ENCODE measurements at regions of chr5 and their contacts with region 1.

Region 1: GRCh38 chr5:179023528-179024430 is at the start of gene ZNF879:
- DNase-seq: peak; percentile 90 to 97 (median 94)
- ATAC-seq: peak; percentile 94
- H3K4me3 ChIP-seq: peak within 1 kb of the TSS; percentile 64
- H3K4me3 Mint-ChIP-seq: peak within 1 kb of the TSS; percentile 95
- H3K27ac ChIP-seq: no peak within 1 kb of the TSS
- H3K27ac Mint-ChIP-seq: peak within 1 kb of the TSS; percentile 83
- H3K4me1 ChIP-seq: peaks cover 22% of the 10 kb centered on the region
- H3K4me1 Mint-ChIP-seq: peaks cover 16% of the 10 kb centered on the region
- H3K27me3 ChIP-seq: no peaks in the 10 kb centered on the region
- H3K27me3 Mint-ChIP-seq: peaks cover 4% of the 10 kb centered on the region
- CTCF ChIP-seq: no peak
- total RNA-seq, gene ZNF879: 4.9 to 5.1 TPM

Region 2: DNA sequence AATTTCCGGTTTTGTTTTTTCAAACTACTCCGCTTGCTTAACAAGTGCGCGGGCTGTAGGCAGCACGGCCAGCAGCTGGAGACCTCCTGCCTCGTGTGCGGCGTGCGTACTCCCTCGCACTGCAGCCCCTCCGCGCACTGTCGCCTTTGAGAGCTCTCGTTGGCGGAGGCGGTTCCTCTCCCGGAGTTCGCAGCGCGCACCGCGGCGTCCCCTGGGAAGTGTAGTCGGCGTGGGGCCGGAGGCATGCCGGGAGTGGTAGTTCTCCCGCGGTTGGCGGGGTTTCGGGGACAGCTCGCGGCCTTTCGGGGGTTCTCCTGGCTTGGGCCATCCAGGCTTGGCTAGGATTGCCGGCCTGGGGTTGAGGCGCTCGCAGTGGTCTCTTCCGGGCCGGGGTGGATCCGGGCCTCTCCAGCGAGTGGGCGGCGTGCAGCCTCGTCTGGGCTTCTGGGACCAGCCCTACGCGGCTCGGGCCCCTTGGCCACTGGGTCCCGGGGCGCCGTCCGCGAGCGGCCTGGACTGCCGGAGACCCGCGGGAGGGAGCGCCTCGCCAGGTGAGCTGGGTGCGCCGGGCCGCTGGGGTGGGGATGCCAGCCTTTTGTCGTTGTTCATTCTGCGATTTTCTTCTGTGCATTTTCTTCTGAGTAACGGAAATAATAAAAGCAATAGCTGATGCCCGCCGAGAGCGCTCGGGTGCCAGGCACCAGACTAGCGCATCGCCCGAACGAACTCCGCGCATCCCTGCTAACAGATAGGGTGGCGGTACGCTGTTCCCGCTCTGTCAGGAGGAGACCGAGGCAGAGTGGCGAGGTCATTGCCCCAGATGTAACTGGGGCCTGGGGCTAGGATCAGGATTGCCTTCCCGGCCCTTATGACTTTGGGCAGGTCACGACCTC is 36.6 kb after region 1 on chr5 and contains the start of gene ZNF354C:
- CTCF ChIA-PET with region 1: interaction called, 3 read pairs
- POLR2A ChIA-PET with region 1: interaction called, 25 read pairs
- intact Hi-C with region 1: loop called (anchors 1 kb)
- DNase-seq: peak; percentile 73 to 91 (median 82)
- ATAC-seq: peak; percentile 97
- H3K4me3 ChIP-seq: peak within 1 kb of the TSS; percentile 75
- H3K4me3 Mint-ChIP-seq: peak within 1 kb of the TSS; percentile 96
- H3K27ac ChIP-seq: peak within 1 kb of the TSS; percentile 47 to 61
- H3K27ac Mint-ChIP-seq: peak within 1 kb of the TSS; percentile 95
- H3K4me1 ChIP-seq: peaks cover 15% of the 10 kb centered on the region
- H3K4me1 Mint-ChIP-seq: peaks cover 34% of the 10 kb centered on the region
- H3K27me3 ChIP-seq: no peaks in the 10 kb centered on the region
- H3K27me3 Mint-ChIP-seq: peaks cover 9% of the 10 kb centered on the region
- CTCF ChIP-seq: no peak
- total RNA-seq, gene ZNF354C: 2.5 to 2.9 TPM

Region 3: DNA sequence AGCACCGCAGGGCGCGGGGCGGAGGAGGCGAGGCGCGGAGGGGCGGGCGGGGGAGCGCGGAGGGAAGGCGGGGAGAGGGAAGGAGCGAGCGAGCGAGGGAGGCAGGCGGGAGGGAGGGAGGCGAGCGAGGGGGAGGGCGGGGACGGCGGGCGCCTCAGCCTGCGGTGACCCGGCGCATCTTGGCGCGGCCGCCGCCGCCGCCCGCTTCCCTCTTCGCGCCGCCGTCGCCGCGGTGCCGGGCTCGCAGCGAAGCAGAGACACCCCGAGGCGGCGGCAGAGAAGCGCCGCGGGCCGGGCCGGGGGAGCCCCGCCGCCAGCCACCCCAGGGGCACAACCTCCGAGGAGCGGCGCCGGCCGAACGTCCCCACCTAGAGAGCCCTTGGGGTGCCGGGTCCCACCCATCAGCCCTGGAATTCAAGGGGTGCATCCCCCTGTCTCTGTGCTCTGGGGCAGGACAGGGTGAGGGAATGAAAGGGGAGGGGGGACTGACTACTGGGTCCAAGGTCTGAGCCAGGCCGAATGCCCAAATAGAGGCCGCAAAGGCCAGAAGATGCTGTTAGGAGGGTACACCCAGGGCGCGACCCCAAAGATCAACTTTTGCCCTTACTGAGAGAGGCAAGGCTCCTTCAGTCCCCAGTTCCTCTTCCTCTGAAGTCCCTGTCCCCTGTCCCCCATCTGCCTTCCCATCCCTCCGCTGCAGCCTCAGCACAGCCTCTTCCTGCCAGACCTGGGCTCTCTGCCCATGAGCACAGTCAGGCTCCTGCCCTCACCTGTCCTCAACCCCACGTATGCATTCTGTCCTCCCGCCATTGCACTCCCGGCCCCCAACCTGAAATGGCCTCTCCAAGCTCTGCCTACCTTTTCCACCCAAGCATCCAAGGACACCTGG is 321.9 kb after region 1 on chr5 and contains the start of gene ADAMTS2:
- CTCF ChIA-PET with region 1: no interaction called
- POLR2A ChIA-PET with region 1: no interaction called
- intact Hi-C with region 1: no loop called
- DNase-seq: no peak
- ATAC-seq: no peak
- H3K4me3 ChIP-seq: no peak within 1 kb of the TSS
- H3K4me3 Mint-ChIP-seq: no peak within 1 kb of the TSS
- H3K27ac ChIP-seq: no peak within 1 kb of the TSS
- H3K27ac Mint-ChIP-seq: no peak within 1 kb of the TSS
- H3K4me1 ChIP-seq: peaks cover 6% of the 10 kb centered on the region
- H3K4me1 Mint-ChIP-seq: peaks cover 16% of the 10 kb centered on the region
- H3K27me3 ChIP-seq: peaks cover 39 to 59% of the 10 kb centered on the region in 2 experiments
- H3K27me3 Mint-ChIP-seq: peaks cover 63% of the 10 kb centered on the region
- CTCF ChIP-seq: no peak
- total RNA-seq, gene ADAMTS2: not detected

Measured in CD4-positive, alpha-beta T cell (primary cell).